Dorsolateral prefrontal cortex (tissue), 120 donors: ENCODE measurements at regions of chr2 and their contacts with region 1.

Region 1: DNA sequence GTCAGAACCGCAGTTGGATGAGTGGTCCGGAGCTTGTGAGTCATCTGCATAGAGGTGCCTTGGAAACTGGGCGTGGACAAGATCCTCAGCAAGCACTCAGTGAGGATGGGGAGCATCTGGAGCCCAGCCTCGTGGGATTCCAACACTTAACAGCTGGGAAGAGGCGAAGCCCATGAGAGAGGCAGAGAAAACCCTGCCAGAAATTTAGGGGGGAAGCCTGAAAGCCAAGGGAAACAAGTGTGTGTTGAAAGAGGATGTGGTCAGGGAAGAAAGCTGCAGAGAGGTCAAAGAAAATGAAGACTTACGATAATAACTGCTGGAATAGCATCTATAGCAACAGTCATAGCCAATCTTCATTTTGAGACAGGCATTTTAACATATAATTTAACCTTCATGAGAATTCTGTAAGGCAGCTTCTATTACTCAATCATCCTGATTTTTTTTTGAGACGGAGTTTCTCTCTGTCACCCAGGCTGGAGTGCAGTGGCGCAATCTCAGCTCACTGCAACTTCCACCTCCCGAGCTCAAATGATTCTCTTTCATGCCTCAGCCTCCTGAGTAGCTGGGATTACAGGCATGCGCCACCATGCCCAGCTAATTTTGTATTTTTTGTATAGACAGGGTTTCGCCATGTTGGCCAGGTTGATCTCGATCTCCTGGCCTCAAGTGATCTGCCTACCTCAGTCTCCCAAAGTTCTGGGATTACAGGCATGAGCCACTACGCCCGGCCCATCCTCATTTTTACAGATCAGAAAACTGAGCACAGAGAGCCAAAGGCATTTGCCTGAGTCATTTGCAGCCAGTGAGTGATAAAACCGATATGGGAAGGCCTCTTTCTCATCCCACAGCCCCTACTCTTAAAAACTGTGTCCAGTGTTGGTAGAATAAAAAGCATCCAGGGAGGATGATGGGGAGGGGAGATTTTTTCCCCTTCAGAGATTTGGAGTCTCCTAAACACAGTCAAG is 214.4 kb upstream of the EPAS1 start:
- DNase-seq: no peak
- H3K4me3 ChIP-seq: no peak overlapping the region
- H3K27ac ChIP-seq: no peak overlapping the region
- H3K27me3 ChIP-seq: no peaks in the 10 kb centered on the region
- CTCF ChIP-seq: no peak

Region 2: DNA sequence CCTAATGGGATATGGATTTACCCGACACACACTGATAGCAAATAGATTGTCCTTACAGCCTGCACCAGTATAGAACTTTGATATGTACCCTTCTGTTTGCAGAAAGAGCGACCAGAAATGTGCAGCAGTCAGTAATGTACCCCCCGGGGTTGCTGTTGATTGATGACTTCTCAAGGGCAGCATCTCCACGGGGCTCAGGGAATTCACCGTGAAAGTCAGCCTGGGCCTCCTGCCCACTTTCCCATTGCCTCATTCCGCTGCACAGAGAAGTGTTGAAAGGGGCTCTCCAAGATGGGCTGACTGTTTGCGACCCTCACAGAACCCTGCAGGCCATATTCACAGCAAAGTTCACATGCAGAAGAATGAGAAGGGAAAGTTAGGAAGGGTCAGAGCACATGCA is 190.0 kb before region 1 on chr2:
- intact Hi-C with region 1: no loop called
- DNase-seq: no peak
- H3K4me3 ChIP-seq: no peak overlapping the region
- H3K27ac ChIP-seq: peak overlapping the region in 1 of 59 donors; percentile 25
- H3K27me3 ChIP-seq: no peaks in the 10 kb centered on the region
- CTCF ChIP-seq: no peak

Region 3: GRCh38 chr2:46097714-46098480 is 15.1 kb after region 1 on chr2:
- intact Hi-C with region 1: loop called in 1 of 2 experiments (anchors 2 kb)
- DNase-seq: no peak
- H3K4me3 ChIP-seq: no peak overlapping the region
- H3K27ac ChIP-seq: peak overlapping the region in 38 of 59 donors; percentile 5 to 81 (median 50)
- H3K27me3 ChIP-seq: no peaks in the 10 kb centered on the region
- CTCF ChIP-seq: no peak